ENCODE measurements at regions of chr10 and their contacts with region 1.

Region 1: DNA sequence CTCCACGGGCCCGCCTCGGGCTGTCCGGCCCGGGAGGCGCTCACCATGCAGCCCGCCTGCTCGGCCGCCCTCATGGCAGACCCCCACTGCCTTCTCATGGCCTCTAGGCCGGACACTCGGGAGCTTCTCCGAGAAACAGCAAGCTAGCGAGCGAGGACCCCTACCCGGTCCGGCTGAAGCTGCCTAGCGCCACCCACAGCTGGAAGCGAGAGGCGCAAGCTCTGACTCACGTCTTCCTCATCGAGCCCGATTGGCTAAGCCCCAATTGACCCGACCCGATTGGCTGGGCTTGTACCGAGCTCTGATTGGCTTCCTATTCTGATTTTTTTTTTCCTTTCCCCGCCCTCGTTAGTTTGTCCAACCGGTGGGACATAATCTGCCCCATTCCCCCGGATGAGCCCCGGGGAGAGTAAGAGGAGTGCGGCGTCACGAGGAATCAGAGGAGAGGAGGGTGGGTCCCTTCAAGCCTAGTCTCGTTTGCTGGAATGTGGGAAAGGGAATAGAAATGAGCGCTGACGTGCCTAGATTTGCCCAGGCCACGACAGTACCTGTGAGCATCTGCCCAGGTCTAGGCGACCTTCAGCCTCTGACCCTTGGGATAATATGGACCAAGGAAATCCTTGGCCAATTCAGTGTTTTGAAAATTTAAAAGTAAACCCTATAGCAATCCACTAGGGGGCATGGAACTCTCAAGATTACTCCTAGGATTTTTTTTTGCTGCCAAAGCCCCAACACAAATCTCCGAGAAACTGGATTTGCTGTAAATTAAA is at the start of gene TYSND1:
- DNase-seq: peak; percentile 98 to 99
- ATAC-seq: peak; percentile 80 to 89
- H3K4me3 ChIP-seq: peak within 1 kb of the TSS; percentile 79
- H3K27ac ChIP-seq: peak within 1 kb of the TSS; percentile 95 to 96
- H3K4me1 ChIP-seq: peaks cover 18% of the 10 kb centered on the region
- CTCF ChIP-seq: peak; percentile 64
- EP300 ChIP-seq: no peak
- POLR2A ChIP-seq: peak; percentile 89
- RAD21 ChIP-seq: peak; percentile 55 to 73
- polyA plus RNA-seq, gene TYSND1: 10.9 and 12.6 TPM in 2 replicates

Region 2: DNA sequence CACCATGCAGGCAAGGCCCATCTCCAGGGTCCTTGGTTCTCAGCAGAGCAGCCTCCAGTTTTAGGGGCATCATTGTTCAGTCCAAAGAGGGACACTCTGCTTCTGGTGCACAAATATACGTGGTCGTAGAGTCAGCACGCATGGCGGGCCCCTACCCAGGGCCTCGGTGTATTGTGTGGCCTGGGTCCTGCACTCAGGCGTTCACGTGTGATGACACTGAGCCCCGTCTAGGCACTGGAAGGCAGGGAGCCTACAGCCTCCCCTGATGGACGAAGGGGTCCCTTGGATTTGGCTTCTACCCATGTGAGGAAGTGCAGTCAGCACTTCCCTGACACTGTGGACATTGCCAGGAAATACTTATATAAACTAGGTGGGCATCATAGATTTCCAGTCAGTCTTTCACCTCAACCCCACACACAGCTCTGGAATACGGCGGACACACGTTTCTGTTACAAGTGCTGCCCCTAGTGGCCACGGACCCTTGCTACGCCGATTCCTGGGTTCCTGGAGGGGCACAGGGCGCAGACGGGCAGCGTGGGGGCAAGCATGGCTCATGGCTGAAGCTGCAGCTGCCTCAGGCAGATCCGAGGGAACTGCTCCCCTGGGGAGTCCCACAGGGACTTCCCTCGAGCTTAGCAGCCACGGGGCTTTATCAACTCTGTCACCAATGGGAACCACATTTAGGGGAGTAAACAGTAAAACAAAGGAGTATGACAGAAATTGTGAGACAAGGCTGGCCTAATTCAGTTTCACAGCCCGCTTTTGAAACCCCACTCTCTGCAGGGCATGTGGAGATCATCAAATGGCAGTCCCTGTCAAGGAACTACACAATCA is 39.5 kb before region 1 on chr10:
- CTCF ChIA-PET with region 1: interaction called, 22 read pairs
- POLR2A ChIA-PET with region 1: interaction called, 4 read pairs
- DNase-seq: peak in 1 of 2 experiments; percentile 46
- ATAC-seq: peak; percentile 70 to 86; a peak in 5 of 6 replicates
- H3K4me3 ChIP-seq: no peak overlapping the region
- H3K27ac ChIP-seq: peak overlapping the region in 1 of 2 experiments; percentile 7; a peak in 1 of 6 replicates
- H3K4me1 ChIP-seq: no peaks in the 10 kb centered on the region
- CTCF ChIP-seq: peak; percentile 52
- EP300 ChIP-seq: no peak
- POLR2A ChIP-seq: no peak
- RAD21 ChIP-seq: peak in 1 of 2 experiments; percentile 33; a peak in 2 of 5 replicates

Region 3: DNA sequence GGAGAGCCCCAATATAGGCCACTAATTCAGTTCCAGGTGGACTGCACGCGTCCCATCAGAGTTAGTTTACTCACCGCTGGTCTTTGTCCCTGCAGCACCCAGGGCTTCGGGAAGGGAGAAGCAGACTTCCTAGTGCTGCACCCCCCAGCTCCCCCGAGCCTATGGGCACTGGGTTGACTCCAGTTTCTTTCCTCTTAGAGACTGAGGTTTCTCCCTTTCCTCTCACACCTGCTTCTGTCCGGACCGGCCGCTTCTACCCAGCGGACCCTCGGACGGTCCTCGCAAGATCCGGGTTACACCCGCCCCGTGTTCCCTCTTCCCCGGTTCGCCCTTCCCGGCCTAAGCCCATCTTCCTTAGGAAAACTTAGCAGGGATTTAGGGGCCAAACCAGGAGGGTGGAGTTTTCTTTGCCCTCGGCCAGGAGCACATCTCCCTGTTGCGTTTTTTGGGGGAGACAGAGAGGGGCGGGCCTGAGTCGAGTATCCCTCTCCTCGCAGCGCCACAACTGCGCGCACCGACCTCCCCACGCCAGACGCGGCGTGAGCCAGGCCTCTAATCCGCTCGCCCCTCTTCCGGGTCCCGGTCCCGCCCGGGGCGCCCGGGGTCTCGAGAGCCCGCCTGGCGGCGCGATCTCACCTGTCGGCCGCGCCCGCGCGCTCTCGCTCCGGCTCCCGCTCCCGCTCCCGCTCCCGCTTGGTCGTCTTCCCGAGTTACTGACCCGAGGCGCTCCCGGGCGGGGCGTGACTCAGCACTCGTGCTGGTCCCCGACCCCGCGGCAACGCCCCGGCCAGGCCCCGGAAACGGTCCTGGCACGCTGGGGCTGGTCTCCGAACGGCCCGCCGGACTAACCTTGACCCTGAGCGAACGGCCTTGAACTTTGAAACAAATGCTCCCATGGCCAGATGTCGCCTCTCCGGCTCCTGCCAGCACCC is 14.3 kb before region 1 on chr10 and contains the start of gene AIFM2:
- CTCF ChIA-PET with region 1: interaction called, 228 read pairs
- POLR2A ChIA-PET with region 1: interaction called, 11 read pairs
- DNase-seq: peak; percentile 83 to 92
- ATAC-seq: peak; percentile 74 to 86
- H3K4me3 ChIP-seq: peak within 1 kb of the TSS; percentile 83
- H3K27ac ChIP-seq: peak within 1 kb of the TSS; percentile 92 to 94
- H3K4me1 ChIP-seq: peaks cover 28% of the 10 kb centered on the region
- CTCF ChIP-seq: no peak
- EP300 ChIP-seq: no peak
- POLR2A ChIP-seq: peak; percentile 29
- RAD21 ChIP-seq: no peak
- polyA plus RNA-seq, gene AIFM2: 27.6 and 30.0 TPM in 2 replicates

Region 4: GRCh38 chr10:70169649-70170364 is 23.1 kb after region 1 on chr10:
- CTCF ChIA-PET with region 1: interaction called, 33 read pairs
- POLR2A ChIA-PET with region 1: interaction called, 52 read pairs
- DNase-seq: no peak
- ATAC-seq: peak; percentile 61 to 64
- H3K4me3 ChIP-seq: peak overlapping the region; percentile 92
- H3K27ac ChIP-seq: peak overlapping the region; percentile 80 to 89
- H3K4me1 ChIP-seq: peaks cover 22% of the 10 kb centered on the region; the same call in 2 of the 3 replicates
- CTCF ChIP-seq: no peak
- EP300 ChIP-seq: no peak
- POLR2A ChIP-seq: no peak
- RAD21 ChIP-seq: no peak

Region 5: DNA sequence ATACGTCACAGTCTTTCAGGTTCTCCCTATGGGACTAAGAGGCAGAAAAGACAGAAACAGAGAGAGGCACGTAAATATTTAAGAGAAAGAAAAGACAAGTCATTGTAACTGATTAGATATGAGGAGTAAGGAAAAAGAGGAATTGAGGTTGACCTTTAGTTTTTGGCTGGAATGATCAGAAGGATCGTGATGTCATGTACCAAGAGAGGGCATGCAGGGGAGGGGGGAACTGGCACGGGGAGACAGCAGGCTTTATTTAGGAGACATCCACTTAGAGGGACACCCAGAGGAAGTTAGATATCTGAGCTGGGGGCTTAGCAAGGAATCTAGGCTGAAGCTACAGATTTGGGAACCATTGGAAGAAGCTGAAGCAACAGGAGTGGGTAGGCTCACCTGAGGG is 245.0 kb after region 1 on chr10:
- CTCF ChIA-PET with region 1: interaction called, 5 read pairs
- POLR2A ChIA-PET with region 1: interaction called, 12 read pairs
- DNase-seq: no peak
- ATAC-seq: no peak
- H3K4me3 ChIP-seq: no peak overlapping the region
- H3K27ac ChIP-seq: no peak overlapping the region
- H3K4me1 ChIP-seq: no peaks in the 10 kb centered on the region; the same call in 2 of the 3 replicates
- CTCF ChIP-seq: no peak
- EP300 ChIP-seq: no peak
- POLR2A ChIP-seq: no peak
- RAD21 ChIP-seq: no peak

Measured in A549 (cell line).